Panc1 (cell line): ENCODE measurements at regions of chr16 and their contacts with region 1.

Region 1: GRCh38 chr16:27972500-27972899 is 91.0 kb downstream of the GSG1L start:
- DNase-seq: peak; percentile 52
- ATAC-seq: peak; percentile 85; the same call in 1 of the 2 replicates
- H3K4me3 ChIP-seq: no peak overlapping the region
- H3K27ac ChIP-seq: no peak overlapping the region
- H3K4me1 ChIP-seq: peaks cover 4% of the 10 kb centered on the region; the same call in 1 of the 2 replicates
- H3K27me3 ChIP-seq: peaks cover 5% of the 10 kb centered on the region; the same call in 1 of the 2 replicates
- CTCF ChIP-seq: peak; percentile 83

Region 2: GRCh38 chr16:27718201-27719105 is 254.0 kb before region 1 on chr16:
- CTCF ChIA-PET with region 1: no interaction called
- POLR2A ChIA-PET with region 1: no interaction called
- in situ Hi-C with region 1: no loop called
- intact Hi-C with region 1: no loop called
- DNase-seq: no peak
- ATAC-seq: no peak
- H3K4me3 ChIP-seq: no peak overlapping the region
- H3K27ac ChIP-seq: no peak overlapping the region
- H3K4me1 ChIP-seq: no peaks in the 10 kb centered on the region
- H3K27me3 ChIP-seq: no peaks in the 10 kb centered on the region
- CTCF ChIP-seq: no peak

Region 3: GRCh38 chr16:27995378-27995777 is 22.9 kb after region 1 on chr16:
- CTCF ChIA-PET with region 1: no interaction called
- POLR2A ChIA-PET with region 1: no interaction called
- in situ Hi-C with region 1: no loop called
- intact Hi-C with region 1: no loop called
- DNase-seq: no peak
- ATAC-seq: no peak
- H3K4me3 ChIP-seq: no peak overlapping the region
- H3K27ac ChIP-seq: no peak overlapping the region
- H3K4me1 ChIP-seq: no peaks in the 10 kb centered on the region
- H3K27me3 ChIP-seq: no peaks in the 10 kb centered on the region
- CTCF ChIP-seq: no peak

Region 4: GRCh38 chr16:28042811-28043210 is 70.3 kb after region 1 on chr16:
- CTCF ChIA-PET with region 1: no interaction called
- POLR2A ChIA-PET with region 1: no interaction called
- in situ Hi-C with region 1: no loop called
- intact Hi-C with region 1: no loop called
- DNase-seq: no peak
- ATAC-seq: no peak
- H3K4me3 ChIP-seq: no peak overlapping the region
- H3K27ac ChIP-seq: no peak overlapping the region
- H3K4me1 ChIP-seq: peaks cover 4% of the 10 kb centered on the region; the same call in 1 of the 2 replicates
- H3K27me3 ChIP-seq: no peaks in the 10 kb centered on the region
- CTCF ChIP-seq: no peak

Region 5: DNA sequence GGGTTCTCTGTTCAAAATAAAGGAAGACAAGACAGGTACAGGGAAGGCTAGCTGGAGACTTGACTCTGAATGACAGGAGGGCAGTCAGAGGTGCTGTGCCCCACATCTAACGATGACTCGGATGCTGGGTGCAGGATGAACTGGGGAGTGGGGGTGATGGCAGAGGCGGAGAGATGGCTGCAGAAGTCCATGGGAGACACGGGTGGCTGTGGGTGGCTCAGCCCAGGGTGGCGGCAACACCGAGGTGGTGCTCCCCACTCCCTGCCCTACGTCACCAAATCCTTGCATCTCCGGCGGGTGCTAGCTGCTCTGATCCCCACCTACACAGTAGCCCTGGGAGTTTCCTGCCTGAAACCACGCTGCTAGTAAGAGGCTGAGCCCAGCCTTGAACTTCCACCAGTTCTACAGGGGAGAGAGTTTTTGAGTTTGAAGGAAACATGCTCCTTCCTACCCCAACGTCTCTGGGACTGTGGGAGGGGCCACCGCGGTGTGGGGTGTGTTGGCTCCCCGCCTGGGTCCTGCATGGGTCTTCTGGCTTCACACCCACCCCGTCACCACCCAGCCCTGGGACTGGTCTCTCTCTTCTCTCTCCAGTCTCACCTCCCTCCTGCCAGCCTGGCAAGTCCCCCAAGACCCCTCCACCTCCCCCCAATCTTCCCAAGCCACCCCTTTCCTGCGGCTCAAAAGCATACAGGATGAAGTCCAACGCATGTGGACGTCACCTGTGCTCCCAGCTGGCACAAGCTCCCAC is 86.5 kb after region 1 on chr16:
- CTCF ChIA-PET with region 1: no interaction called
- POLR2A ChIA-PET with region 1: no interaction called
- in situ Hi-C with region 1: no loop called
- intact Hi-C with region 1: no loop called
- DNase-seq: no peak
- ATAC-seq: no peak
- H3K4me3 ChIP-seq: no peak overlapping the region
- H3K27ac ChIP-seq: no peak overlapping the region
- H3K4me1 ChIP-seq: no peaks in the 10 kb centered on the region
- H3K27me3 ChIP-seq: peaks cover 16% of the 10 kb centered on the region
- CTCF ChIP-seq: no peak

Region 6: DNA sequence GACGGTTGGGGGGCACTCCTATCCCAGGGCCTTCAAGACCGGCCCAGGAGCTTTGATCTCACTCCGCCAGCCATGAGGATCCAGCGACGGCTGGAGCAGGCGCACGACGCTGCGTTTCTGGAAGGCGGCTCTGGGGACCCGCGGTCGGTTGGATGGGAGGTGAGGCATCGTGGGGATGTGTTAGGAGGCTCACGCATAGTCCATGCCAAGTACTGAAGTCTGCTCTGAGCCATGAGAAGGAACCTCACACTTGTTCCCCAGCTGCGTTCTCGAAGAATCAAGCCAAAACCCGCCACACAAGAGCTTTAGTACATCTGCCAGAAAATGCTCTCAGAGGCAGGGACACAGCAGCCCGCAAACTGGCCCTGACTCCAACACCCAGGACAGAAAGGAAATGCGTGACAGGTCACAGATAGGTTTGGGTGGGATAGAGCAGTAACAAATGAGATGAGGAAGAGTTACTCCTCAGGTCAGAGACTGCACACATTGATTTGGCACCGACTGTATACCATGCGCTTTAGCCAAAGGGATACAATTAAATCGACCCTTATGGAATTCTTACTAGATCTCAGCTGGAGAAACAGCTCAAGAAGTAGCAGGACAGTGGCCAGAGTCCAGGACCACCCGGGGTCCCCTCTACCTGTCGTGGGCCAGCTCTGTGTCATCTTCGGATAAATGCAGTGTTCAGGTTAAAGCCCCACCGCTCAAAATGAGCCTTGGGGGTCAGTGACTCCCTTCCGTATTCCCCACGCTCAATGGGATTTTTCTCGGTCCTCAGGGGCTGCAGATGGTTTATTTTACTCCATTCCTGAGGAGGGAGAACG is 97.7 kb after region 1 on chr16:
- CTCF ChIA-PET with region 1: interaction called, 16 read pairs
- POLR2A ChIA-PET with region 1: no interaction called
- in situ Hi-C with region 1: no loop called
- intact Hi-C with region 1: loop called (anchors 1 kb)
- DNase-seq: no peak
- ATAC-seq: peak; percentile 44
- H3K4me3 ChIP-seq: no peak overlapping the region
- H3K27ac ChIP-seq: no peak overlapping the region
- H3K4me1 ChIP-seq: no peaks in the 10 kb centered on the region
- H3K27me3 ChIP-seq: peaks cover 5% of the 10 kb centered on the region
- CTCF ChIP-seq: no peak